ENCODE measurements at regions of chrX and their contacts with region 1.

Region 1: DNA sequence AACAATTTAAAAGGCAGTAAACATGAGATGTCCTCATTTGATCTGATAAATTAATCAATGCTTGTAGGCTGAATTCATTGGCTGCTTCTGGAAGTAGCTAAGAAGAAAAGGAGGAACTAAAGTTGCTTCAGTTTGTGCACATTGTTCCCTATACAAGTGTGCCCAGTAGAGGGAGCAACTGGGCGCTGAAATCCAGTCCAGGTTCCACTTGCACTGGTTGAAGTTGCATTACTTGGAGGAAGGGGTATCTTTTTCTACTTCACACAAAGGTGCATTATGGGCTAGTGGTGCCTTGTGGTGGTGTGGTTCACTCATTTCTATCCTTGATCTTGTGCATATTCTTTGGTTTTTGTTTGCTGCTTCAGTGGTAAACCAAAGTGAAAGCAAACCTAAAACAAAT is 67.9 kb upstream of the SOX3 start:
- DNase-seq: peak; percentile 16
- H3K4me3 Mint-ChIP-seq: no peak overlapping the region
- H3K27ac Mint-ChIP-seq: no peak overlapping the region
- H3K4me1 Mint-ChIP-seq: no peaks in the 10 kb centered on the region
- H3K27me3 Mint-ChIP-seq: no peaks in the 10 kb centered on the region
- CTCF ChIP-seq: no peak

Region 2: GRCh38 chrX:140733769-140734342 is 161.1 kb after region 1 on chrX:
- CTCF ChIA-PET with region 1: no interaction called
- intact Hi-C with region 1: loop called (anchors 5 kb)
- DNase-seq: peak; percentile 2
- H3K4me3 Mint-ChIP-seq: no peak overlapping the region
- H3K27ac Mint-ChIP-seq: no peak overlapping the region
- H3K4me1 Mint-ChIP-seq: no peaks in the 10 kb centered on the region
- H3K27me3 Mint-ChIP-seq: no peaks in the 10 kb centered on the region
- CTCF ChIP-seq: peak; percentile 41